Adrenal gland (tissue), 19 donors: ENCODE measurements at regions of chr3 and their contacts with region 1.

Region 1: GRCh38 chr3:20511863-20512505 is 326.0 kb upstream of the SGO1 start:
- DNase-seq: peak in 4 of 7 donors; percentile 5 to 27 (median 16)
- H3K4me3 ChIP-seq: no peak overlapping the region
- H3K27ac ChIP-seq: no peak overlapping the region
- H3K4me1 ChIP-seq: no peaks in the 10 kb centered on the region
- H3K27me3 ChIP-seq: no peaks in the 10 kb centered on the region
- CTCF ChIP-seq: peak in 5 of 6 experiments; percentile 35 to 69 (median 55)
- POLR2A ChIP-seq: no peak

Region 2: DNA sequence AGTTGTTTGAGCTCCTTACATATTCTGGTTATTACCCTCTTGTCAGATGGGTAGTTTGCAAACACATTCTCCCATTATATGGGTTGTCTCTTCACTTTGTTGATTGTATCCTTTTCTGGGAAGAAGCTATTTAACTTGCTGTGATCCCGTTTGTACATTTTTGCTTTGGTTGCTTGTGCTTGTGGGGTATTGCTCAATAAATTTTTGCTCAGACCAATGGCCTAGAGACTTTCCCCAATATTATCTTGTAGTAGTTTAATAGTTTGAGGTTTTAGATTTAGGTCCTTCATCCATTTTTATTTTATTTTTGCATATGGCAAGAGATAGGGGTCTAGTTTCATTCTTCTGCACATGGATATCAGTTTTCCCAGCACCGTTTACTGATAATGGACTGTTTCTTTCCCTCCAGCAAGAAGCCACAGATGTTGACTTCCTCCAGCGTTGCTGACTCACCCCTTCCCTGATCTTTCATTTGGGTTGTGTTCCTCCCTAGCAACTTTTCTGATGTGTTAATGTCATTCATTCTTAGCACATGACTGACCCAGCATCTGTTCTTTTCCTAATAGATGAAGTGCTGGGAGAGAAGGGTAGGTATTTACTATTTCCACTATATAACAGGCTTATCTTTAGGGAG is 159.3 kb before region 1 on chr3:
- intact Hi-C with region 1: no loop called
- DNase-seq: no peak
- H3K4me3 ChIP-seq: no peak overlapping the region
- H3K27ac ChIP-seq: no peak overlapping the region
- H3K4me1 ChIP-seq: no peaks in the 10 kb centered on the region
- H3K27me3 ChIP-seq: no peaks in the 10 kb centered on the region
- CTCF ChIP-seq: no peak
- POLR2A ChIP-seq: no peak

Region 3: DNA sequence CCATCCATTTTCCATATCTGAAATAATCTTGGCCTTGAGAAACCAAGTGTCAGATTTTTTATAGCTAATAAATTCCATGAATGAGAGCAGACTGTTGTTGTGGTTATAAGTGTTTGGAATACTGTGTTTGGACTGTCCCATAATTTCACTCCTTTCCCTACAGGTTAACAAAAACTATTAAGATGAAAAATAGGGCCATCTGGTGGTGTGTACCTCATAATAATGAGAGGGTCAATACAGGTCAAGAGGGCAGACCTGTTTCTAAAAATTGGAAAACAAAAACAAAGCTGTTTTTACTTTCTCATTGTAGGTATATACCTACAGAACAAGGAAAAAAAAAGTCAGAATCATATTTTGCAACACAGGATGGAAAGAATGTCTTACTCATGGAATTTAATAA is 227.8 kb after region 1 on chr3:
- intact Hi-C with region 1: loop called in 1 of 2 experiments (anchors 5 kb)
- DNase-seq: no peak
- H3K4me3 ChIP-seq: no peak overlapping the region
- H3K27ac ChIP-seq: no peak overlapping the region
- H3K4me1 ChIP-seq: no peaks in the 10 kb centered on the region
- H3K27me3 ChIP-seq: no peaks in the 10 kb centered on the region
- CTCF ChIP-seq: peak in 1 of 6 experiments; percentile 37
- POLR2A ChIP-seq: no peak